ENCODE measurements at regions of chr17 and their contacts with region 1.

Region 1: GRCh38 chr17:8073627-8074484 is 13.7 kb downstream of the ALOX12B start:
- DNase-seq: peak; percentile 57 to 87 (median 66)
- ATAC-seq: peak in 3 of 4 donors; percentile 55 to 79 (median 78)
- H3K4me3 ChIP-seq: peak overlapping the region in 2 of 12 donors; percentile 6 to 34
- H3K27ac ChIP-seq: no peak overlapping the region
- H3K4me1 ChIP-seq: peaks cover 0 to 31% (median 16%) of the 10 kb centered on the region in 12 donors
- H3K27me3 ChIP-seq: peaks cover 28 to 84% (median 72%) of the 10 kb centered on the region in 9 donors
- CTCF ChIP-seq: peak; percentile 71 to 97 (median 88)
- POLR2A ChIP-seq: no peak

Region 2: DNA sequence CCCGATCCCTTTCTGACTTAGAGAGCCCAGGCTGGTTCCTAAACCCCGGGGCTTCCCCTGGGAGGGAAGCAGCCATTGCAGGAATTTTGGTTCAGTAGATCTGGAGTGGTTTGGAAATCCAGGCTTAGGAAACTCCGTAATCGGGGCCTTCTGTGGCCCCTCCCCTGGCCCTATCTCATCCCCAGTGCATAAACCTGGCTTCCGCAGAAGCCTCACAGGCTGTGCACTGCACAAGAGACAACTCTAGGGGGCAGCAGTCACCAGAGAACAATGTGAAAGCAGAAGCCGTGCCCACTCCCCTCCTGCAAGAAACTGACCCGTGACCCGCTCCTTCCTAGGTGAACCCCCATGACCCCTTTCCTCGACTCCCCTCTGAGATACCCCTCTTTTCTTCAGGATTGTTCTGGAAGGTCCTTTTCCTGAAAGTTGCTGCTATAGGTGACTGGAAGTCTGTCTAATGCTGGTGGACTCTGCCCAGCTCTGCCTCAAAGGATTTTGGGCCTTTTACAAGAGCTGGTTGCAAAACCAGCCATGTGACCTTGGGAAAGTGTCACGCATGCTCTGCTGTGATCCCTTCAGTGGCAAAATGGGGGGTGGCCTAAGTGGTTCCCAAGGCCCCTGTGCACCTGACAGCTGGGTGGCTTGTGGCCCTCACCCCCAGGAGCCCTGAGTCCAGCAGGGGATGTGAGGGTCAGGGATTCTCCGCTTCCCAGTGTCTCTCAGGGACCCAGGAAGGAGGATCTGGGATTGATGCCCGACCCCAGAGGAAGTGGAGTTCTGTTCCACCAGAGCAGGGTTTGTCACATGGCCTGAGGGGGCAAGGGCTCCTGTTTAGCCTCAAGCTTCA is 57.0 kb before region 1 on chr17:
- intact Hi-C with region 1: no loop called
- DNase-seq: peak in 1 of 5 donors; percentile 60
- ATAC-seq: peak in 3 of 4 donors; percentile 56 to 79 (median 67)
- H3K4me3 ChIP-seq: peak overlapping the region; percentile 2 to 51 (median 46)
- H3K27ac ChIP-seq: no peak overlapping the region
- H3K4me1 ChIP-seq: peaks cover 0 to 45% (median 14%) of the 10 kb centered on the region in 12 donors
- H3K27me3 ChIP-seq: peaks cover 0 to 14% (median 10%) of the 10 kb centered on the region in 9 donors
- CTCF ChIP-seq: peak; percentile 32 to 61 (median 52)
- POLR2A ChIP-seq: no peak

Region 3: GRCh38 chr17:8109661-8110464 is 36.0 kb after region 1 on chr17:
- intact Hi-C with region 1: loop called in 1 of 10 experiments (anchors 5 kb)
- DNase-seq: peak; percentile 19 to 83 (median 47)
- ATAC-seq: peak in 3 of 4 donors; percentile 64 to 73 (median 67)
- H3K4me3 ChIP-seq: peak overlapping the region in 3 of 12 donors; percentile 12 to 42 (median 26)
- H3K27ac ChIP-seq: no peak overlapping the region
- H3K4me1 ChIP-seq: peaks cover 0 to 17% (median 7%) of the 10 kb centered on the region in 12 donors
- H3K27me3 ChIP-seq: peaks cover 15 to 63% (median 45%) of the 10 kb centered on the region in 9 donors
- CTCF ChIP-seq: peak; percentile 61 to 90 (median 72)
- POLR2A ChIP-seq: no peak

Region 4: GRCh38 chr17:8345052-8345682 is 271.3 kb after region 1 on chr17:
- intact Hi-C with region 1: no loop called
- DNase-seq: no peak
- ATAC-seq: no peak
- H3K4me3 ChIP-seq: no peak overlapping the region
- H3K27ac ChIP-seq: no peak overlapping the region
- H3K4me1 ChIP-seq: no peaks in the 10 kb centered on the region
- H3K27me3 ChIP-seq: peaks cover 0 to 17% (median 0%) of the 10 kb centered on the region in 9 donors
- CTCF ChIP-seq: no peak
- POLR2A ChIP-seq: no peak

Region 5: DNA sequence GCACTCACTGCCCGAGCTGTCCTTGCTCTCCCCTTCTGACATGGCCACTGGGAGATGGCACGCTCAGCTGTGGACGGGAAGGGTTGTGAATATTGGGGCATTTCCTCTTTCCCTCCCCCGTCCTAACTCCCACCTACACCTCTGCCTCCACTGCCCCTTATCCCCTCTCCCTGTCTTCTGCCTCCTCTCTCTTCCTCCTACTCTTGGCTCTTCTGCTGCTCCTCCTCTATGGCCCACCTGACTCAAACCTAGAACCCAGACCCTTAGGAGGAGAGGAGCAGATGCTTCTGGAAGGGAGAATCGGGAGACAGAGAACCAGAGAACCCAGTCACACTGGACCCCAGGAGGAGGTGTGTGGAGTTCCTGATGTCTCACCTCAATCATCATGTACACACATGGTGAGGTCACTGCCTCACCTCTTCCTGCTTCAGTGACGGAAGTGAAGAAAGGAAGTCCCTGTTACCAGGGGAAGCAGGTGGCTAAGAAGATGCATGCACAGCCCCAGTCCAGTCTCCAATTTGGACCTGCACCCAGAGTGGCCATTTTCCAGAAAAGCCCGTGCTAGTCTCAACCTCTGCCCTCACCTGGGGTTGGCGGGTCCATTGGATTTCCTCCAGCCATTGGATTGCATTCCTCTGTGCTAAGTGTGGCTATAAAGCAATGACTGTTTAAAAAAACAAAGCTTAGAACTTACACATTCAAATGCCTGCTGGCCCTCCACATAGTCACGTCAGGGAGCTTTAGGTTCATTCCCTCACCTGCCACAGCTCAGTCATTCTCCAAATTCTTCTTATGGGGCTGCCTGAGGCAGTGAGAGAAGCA is 319.8 kb after region 1 on chr17:
- intact Hi-C with region 1: no loop called
- DNase-seq: no peak
- ATAC-seq: peak in 2 of 4 donors; percentile 44 to 54
- H3K4me3 ChIP-seq: no peak overlapping the region
- H3K27ac ChIP-seq: no peak overlapping the region
- H3K4me1 ChIP-seq: peaks cover 0 to 6% (median 0%) of the 10 kb centered on the region in 12 donors
- H3K27me3 ChIP-seq: peaks cover 0 to 41% (median 21%) of the 10 kb centered on the region in 9 donors
- CTCF ChIP-seq: no peak
- POLR2A ChIP-seq: no peak